A549 (cell line): ENCODE measurements at regions of chr6 and their contacts with region 1.

Region 1: DNA sequence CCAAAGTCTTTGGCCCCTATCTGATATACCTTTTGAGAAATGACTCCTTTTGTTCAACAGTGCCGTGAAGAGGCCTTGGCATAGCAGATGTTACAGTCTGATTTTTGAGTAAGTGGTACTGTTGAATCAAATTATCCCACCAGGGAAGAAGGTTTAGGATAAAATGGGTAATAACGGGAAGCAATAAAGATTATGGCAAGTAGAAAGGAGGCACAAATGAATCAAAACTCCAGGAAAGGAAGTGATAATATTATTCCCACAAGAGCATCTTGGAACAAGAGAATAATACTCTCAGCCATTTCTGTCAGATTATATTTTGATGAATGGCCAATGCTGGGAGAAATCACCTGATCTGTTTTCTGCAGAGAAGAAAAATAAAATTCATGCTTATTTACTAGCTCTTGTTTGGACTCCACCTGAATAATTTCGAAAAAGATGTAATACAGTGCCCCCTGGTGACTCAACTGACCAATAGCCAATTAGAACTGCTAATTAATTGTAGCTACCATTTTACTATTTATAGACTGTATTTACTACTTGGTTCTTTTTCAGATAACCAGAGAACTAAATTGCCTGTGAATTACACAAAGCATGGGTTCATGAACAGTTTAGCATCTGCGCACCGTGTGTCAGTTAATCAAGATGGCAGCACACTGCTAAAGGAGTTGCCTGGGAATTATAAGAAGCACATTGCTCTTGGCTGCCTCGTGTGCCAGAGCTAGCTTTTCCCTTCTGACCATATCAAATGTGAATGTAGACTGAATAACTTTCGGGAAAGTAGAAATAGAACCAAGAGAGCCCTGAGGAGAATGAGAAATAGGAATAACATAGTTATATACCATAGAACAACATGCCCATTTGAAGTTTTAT is 78.5 kb upstream of the TRDN start:
- DNase-seq: peak in 1 of 2 experiments; percentile 17
- ATAC-seq: peak in 1 of 2 experiments; percentile 45; a peak in 1 of 6 replicates
- H3K4me3 ChIP-seq: no peak overlapping the region
- H3K27ac ChIP-seq: no peak overlapping the region
- H3K4me1 ChIP-seq: no peaks in the 10 kb centered on the region
- CTCF ChIP-seq: peak; percentile 55
- EP300 ChIP-seq: no peak
- POLR2A ChIP-seq: no peak
- RAD21 ChIP-seq: peak; percentile 59 to 61

Region 2: GRCh38 chr6:123393328-123393727 is 321.9 kb before region 1 on chr6:
- CTCF ChIA-PET with region 1: interaction called, 14 read pairs
- POLR2A ChIA-PET with region 1: no interaction called
- DNase-seq: peak in 1 of 2 experiments; percentile 5
- ATAC-seq: no peak; a peak in 1 of 6 replicates
- H3K4me3 ChIP-seq: no peak overlapping the region
- H3K27ac ChIP-seq: no peak overlapping the region
- H3K4me1 ChIP-seq: no peaks in the 10 kb centered on the region
- CTCF ChIP-seq: peak; percentile 30; the same call in 2 of the 3 replicates
- EP300 ChIP-seq: no peak
- POLR2A ChIP-seq: no peak
- RAD21 ChIP-seq: peak; percentile 48 to 49

Region 3: GRCh38 chr6:123415844-123416468 is 299.3 kb before region 1 on chr6:
- CTCF ChIA-PET with region 1: interaction called, 22 read pairs
- POLR2A ChIA-PET with region 1: no interaction called
- DNase-seq: peak; percentile 0 to 62
- ATAC-seq: peak in 1 of 2 experiments; percentile 60; a peak in 2 of 6 replicates
- H3K4me3 ChIP-seq: no peak overlapping the region
- H3K27ac ChIP-seq: no peak overlapping the region
- H3K4me1 ChIP-seq: no peaks in the 10 kb centered on the region
- CTCF ChIP-seq: peak; percentile 68
- EP300 ChIP-seq: no peak
- POLR2A ChIP-seq: no peak
- RAD21 ChIP-seq: peak; percentile 54 to 65

Region 4: GRCh38 chr6:123519191-123519510 is 196.1 kb before region 1 on chr6:
- CTCF ChIA-PET with region 1: no interaction called
- POLR2A ChIA-PET with region 1: no interaction called
- DNase-seq: no peak
- ATAC-seq: no peak
- H3K4me3 ChIP-seq: no peak overlapping the region
- H3K27ac ChIP-seq: no peak overlapping the region
- H3K4me1 ChIP-seq: no peaks in the 10 kb centered on the region
- CTCF ChIP-seq: no peak
- EP300 ChIP-seq: no peak
- POLR2A ChIP-seq: no peak
- RAD21 ChIP-seq: no peak

Region 5: GRCh38 chr6:123962508-123962907 is 247.3 kb after region 1 on chr6:
- CTCF ChIA-PET with region 1: no interaction called
- POLR2A ChIA-PET with region 1: no interaction called
- DNase-seq: no peak
- ATAC-seq: no peak
- H3K4me3 ChIP-seq: no peak overlapping the region
- H3K27ac ChIP-seq: no peak overlapping the region
- H3K4me1 ChIP-seq: no peaks in the 10 kb centered on the region
- CTCF ChIP-seq: no peak
- EP300 ChIP-seq: no peak
- POLR2A ChIP-seq: no peak
- RAD21 ChIP-seq: no peak